ENCODE measurements at regions of chr12 and their contacts with region 1.

Region 1: GRCh38 chr12:27515671-27516070 is 8.3 kb upstream of the PPFIBP1 start:
- DNase-seq: no peak
- H3K4me3 Mint-ChIP-seq: no peak overlapping the region
- H3K27ac Mint-ChIP-seq: no peak overlapping the region
- H3K4me1 Mint-ChIP-seq: peaks cover 35% of the 10 kb centered on the region
- H3K27me3 Mint-ChIP-seq: no peaks in the 10 kb centered on the region
- CTCF ChIP-seq: no peak

Region 2: DNA sequence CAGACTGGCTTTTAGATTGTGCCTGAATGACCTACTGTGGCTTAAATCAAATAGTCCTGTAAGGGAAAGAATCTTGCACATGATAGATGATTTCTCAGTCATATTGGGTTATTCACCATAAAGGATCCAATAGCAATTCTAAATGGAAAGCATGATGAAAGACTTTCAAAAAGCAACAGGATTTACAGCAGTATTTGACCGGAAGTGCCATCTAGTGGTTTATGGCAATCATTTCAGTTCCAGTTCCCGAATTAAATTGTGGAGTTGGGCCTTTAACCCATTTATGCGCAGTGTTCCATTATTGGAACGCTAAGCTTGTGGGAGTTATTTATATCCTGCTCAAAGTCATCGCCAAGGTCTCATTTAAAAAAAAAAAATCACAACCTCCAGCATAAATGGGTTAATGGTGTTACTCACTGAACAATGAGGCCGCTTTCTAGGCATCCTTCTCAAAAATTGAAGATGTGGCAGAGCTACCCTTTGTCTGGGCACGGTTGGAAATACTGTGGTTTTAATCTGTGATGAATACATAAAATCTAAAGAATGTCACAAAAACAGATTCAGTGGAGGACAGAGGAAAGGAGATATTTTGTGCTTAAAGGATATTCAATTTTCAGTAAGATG is 119.8 kb after region 1 on chr12:
- CTCF ChIA-PET with region 1: no interaction called
- intact Hi-C with region 1: loop called (anchors 5 kb)
- DNase-seq: peak; percentile 12
- H3K4me3 Mint-ChIP-seq: no peak overlapping the region
- H3K27ac Mint-ChIP-seq: no peak overlapping the region
- H3K4me1 Mint-ChIP-seq: peaks cover 8% of the 10 kb centered on the region
- H3K27me3 Mint-ChIP-seq: no peaks in the 10 kb centered on the region
- CTCF ChIP-seq: peak; percentile 35

Region 3: GRCh38 chr12:28316049-28316448 is 800.4 kb after region 1 on chr12:
- CTCF ChIA-PET with region 1: no interaction called
- intact Hi-C with region 1: no loop called
- DNase-seq: no peak
- H3K4me3 Mint-ChIP-seq: no peak overlapping the region
- H3K27ac Mint-ChIP-seq: no peak overlapping the region
- H3K4me1 Mint-ChIP-seq: no peaks in the 10 kb centered on the region
- H3K27me3 Mint-ChIP-seq: no peaks in the 10 kb centered on the region
- CTCF ChIP-seq: no peak

Measured in Calu3 (cell line).